Endothelial cell of umbilical vein (primary cell): ENCODE measurements at regions of chr20 and their contacts with region 1.

Region 1: DNA sequence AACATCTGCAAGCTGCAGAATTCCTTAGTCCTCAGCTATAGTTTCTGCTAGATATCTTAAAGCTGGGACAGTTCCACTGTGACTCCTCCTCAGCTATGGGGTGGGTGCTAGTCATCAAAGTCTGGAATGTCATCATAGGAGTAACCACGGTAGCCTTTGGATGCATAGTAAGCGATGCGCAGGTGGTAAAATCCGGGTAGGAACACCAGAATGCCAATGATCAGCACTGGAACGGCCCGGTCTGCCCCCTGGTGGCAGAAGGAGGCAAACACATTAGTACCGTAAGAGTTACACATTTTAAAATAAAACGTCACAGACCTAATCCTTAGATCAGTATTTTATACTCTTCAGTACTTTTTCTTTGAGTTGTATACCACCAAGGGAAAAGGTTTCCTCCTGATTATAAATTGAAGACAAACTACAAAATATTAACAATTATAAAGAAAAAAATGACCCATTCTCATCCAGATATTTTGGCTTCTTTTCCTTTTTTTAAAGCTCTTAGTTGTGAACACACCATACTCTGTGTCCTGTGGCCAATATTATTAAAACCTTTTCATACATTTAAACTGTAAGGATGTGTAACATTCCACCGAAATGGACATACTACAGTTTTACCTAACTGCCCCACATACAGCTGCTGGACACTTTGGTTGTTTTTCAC is 18.9 kb downstream of the PCNA start:
- DNase-seq: peak; percentile 74
- H3K4me3 ChIP-seq: no peak overlapping the region
- H3K27ac ChIP-seq: no peak overlapping the region
- H3K4me1 ChIP-seq: no peaks in the 10 kb centered on the region
- H3K27me3 ChIP-seq: no peaks in the 10 kb centered on the region
- CTCF ChIP-seq: peak; percentile 73 to 76
- POLR2A ChIP-seq: no peak

Region 2: GRCh38 chr20:4607287-4607713 is 493.5 kb before region 1 on chr20:
- CTCF ChIA-PET with region 1: interaction called, 14 read pairs
- POLR2A ChIA-PET with region 1: no interaction called
- dilution Hi-C with region 1: no loop called
- intact Hi-C with region 1: loop called (anchors 1 kb)
- DNase-seq: peak; percentile 66
- H3K4me3 ChIP-seq: no peak overlapping the region
- H3K27ac ChIP-seq: no peak overlapping the region
- H3K4me1 ChIP-seq: no peaks in the 10 kb centered on the region
- H3K27me3 ChIP-seq: peaks cover 19 to 33% of the 10 kb centered on the region in 2 experiments
- CTCF ChIP-seq: peak; percentile 73 to 86
- POLR2A ChIP-seq: no peak

Region 3: DNA sequence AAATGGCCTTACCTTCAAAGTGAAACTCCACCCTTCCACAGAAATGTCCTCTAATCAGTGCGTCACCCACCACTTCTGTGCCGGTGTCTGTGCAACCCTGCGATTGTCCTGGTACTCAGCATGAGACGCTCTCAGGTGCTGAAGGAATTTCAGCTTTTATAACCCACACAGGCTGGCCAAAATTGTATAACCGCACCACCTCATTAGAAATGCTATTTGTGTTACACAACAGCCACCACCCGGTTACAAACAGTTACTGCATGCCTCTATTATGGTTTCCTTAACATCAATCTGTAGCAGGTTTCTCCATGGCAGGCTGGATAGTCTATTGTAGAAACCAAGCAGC is 151.0 kb before region 1 on chr20:
- CTCF ChIA-PET with region 1: interaction called, 48 read pairs
- POLR2A ChIA-PET with region 1: no interaction called
- dilution Hi-C with region 1: no loop called
- intact Hi-C with region 1: no loop called
- DNase-seq: peak; percentile 46
- H3K4me3 ChIP-seq: no peak overlapping the region
- H3K27ac ChIP-seq: no peak overlapping the region
- H3K4me1 ChIP-seq: peaks cover 12% of the 10 kb centered on the region
- H3K27me3 ChIP-seq: no peaks in the 10 kb centered on the region
- CTCF ChIP-seq: peak in 1 of 2 donors; percentile 41
- POLR2A ChIP-seq: no peak

Region 4: DNA sequence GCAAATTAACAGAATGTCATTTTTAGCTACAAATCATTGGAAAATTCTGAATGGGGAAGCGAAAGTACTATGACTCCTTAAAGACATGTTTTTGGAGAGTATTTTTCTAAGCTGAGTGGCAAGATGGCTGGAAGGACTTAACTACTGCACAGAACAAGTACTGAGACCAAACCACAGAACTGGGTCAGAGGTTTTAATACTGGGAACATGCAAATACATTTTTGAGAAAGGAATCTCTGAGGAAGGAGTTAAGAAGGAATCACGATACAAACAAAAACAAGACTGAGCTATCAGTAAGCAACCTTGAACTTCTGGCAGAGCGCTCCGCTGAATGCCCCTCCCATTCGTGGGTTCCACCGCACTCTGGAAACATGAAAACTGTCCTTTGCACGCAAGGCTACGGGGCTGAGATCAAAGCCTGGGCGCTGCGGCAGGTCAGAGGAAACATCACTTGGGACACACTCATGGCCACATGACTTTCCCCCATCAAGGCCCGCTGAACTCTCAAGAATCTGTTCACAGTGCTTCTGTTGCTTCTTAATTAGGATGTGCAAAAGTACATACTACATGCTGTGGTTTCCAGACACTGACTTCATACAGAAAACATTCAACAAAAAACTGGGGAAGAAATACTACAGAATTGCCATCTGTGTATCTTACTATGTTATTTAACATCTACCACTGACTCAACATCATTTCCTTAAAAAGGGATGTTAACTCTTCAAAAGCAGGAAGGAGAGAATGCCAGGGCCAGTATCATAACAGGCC is 127.3 kb before region 1 on chr20:
- CTCF ChIA-PET with region 1: interaction called, 6 read pairs
- POLR2A ChIA-PET with region 1: no interaction called
- dilution Hi-C with region 1: no loop called
- intact Hi-C with region 1: loop called (anchors 1 kb)
- DNase-seq: peak; percentile 95
- H3K4me3 ChIP-seq: peak overlapping the region; percentile 17 to 69 (median 34)
- H3K27ac ChIP-seq: peak overlapping the region; percentile 92
- H3K4me1 ChIP-seq: peaks cover 30% of the 10 kb centered on the region
- H3K27me3 ChIP-seq: no peaks in the 10 kb centered on the region
- CTCF ChIP-seq: no peak
- POLR2A ChIP-seq: no peak

Region 5: DNA sequence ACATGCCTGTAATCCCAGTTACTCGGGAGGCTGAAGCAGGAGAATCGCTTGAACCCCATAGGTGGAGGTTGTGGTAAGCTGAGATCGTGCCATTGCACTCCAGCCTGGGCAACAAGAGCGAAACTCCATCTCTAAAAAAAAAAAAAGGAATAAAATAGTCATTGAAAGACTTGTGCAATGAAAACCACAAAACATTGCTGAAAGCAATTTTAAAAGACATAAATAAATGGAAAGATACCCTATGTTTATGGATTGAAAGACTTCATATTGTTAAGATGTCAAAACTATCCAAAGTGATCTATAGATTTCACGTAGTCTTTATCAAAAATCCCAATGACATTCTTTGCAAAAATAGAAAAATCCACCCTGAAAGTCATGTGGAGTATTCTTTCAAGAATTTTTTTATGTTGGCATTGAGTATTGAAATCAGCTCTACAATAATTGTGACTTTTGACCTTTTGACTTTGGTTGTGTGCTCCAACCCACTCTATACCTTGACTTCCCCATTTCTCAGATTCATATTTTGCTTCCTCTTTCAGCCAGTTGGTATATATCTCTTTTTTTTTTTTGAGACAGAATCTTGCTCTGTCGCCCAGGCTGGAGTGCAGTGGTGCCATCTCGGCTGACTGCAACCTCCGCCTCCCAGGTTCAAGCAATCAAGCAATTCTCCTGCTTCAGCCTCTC is 54.0 kb before region 1 on chr20:
- CTCF ChIA-PET with region 1: interaction called, 12 read pairs
- POLR2A ChIA-PET with region 1: no interaction called
- dilution Hi-C with region 1: no loop called
- intact Hi-C with region 1: no loop called
- DNase-seq: no peak
- H3K4me3 ChIP-seq: no peak overlapping the region
- H3K27ac ChIP-seq: no peak overlapping the region
- H3K4me1 ChIP-seq: no peaks in the 10 kb centered on the region
- H3K27me3 ChIP-seq: peaks cover 0 to 2% of the 10 kb centered on the region in 2 experiments
- CTCF ChIP-seq: no peak
- POLR2A ChIP-seq: no peak

Region 6: GRCh38 chr20:5065879-5066383 is 34.9 kb before region 1 on chr20:
- CTCF ChIA-PET with region 1: interaction called, 14 read pairs
- POLR2A ChIA-PET with region 1: interaction called, 3 read pairs
- dilution Hi-C with region 1: no loop called
- intact Hi-C with region 1: no loop called
- DNase-seq: peak; percentile 75
- H3K4me3 ChIP-seq: no peak overlapping the region
- H3K27ac ChIP-seq: peak overlapping the region; percentile 81
- H3K4me1 ChIP-seq: peaks cover 16% of the 10 kb centered on the region
- H3K27me3 ChIP-seq: no peaks in the 10 kb centered on the region
- CTCF ChIP-seq: no peak
- POLR2A ChIP-seq: no peak